ENCODE measurements at regions of chr3 and their contacts with region 1.

Region 1: GRCh38 chr3:39107388-39108199 is at the starts of genes GORASP1 and TTC21A:
- DNase-seq: peak; percentile 92 to 96
- H3K4me3 ChIP-seq: peak within 1 kb of the TSS; percentile 69 to 96
- H3K27ac ChIP-seq: peak within 1 kb of the TSS; percentile 90
- H3K4me1 ChIP-seq: peaks cover 58% of the 10 kb centered on the region
- H3K27me3 ChIP-seq: no peaks in the 10 kb centered on the region
- CTCF ChIP-seq: peak in 1 of 3 experiments; percentile 27
- POLR2A ChIP-seq: peak in 1 of 2 donors; percentile 53
- total RNA-seq, gene GORASP1: 45.9 TPM
- total RNA-seq, gene TTC21A: 8.8 TPM

Region 2: GRCh38 chr3:39146984-39147591 is 39.5 kb after region 1 on chr3:
- intact Hi-C with region 1: loop called (anchors 5 kb)
- DNase-seq: no peak
- H3K4me3 ChIP-seq: peak overlapping the region; percentile 0 to 33
- H3K27ac ChIP-seq: peak overlapping the region; percentile 100
- H3K4me1 ChIP-seq: peaks cover 84% of the 10 kb centered on the region
- H3K27me3 ChIP-seq: no peaks in the 10 kb centered on the region
- CTCF ChIP-seq: no peak
- POLR2A ChIP-seq: peak in 1 of 2 donors; percentile 9